T-cell (primary cell): ENCODE measurements at regions of chr11 and their contacts with region 1.

Region 1: DNA sequence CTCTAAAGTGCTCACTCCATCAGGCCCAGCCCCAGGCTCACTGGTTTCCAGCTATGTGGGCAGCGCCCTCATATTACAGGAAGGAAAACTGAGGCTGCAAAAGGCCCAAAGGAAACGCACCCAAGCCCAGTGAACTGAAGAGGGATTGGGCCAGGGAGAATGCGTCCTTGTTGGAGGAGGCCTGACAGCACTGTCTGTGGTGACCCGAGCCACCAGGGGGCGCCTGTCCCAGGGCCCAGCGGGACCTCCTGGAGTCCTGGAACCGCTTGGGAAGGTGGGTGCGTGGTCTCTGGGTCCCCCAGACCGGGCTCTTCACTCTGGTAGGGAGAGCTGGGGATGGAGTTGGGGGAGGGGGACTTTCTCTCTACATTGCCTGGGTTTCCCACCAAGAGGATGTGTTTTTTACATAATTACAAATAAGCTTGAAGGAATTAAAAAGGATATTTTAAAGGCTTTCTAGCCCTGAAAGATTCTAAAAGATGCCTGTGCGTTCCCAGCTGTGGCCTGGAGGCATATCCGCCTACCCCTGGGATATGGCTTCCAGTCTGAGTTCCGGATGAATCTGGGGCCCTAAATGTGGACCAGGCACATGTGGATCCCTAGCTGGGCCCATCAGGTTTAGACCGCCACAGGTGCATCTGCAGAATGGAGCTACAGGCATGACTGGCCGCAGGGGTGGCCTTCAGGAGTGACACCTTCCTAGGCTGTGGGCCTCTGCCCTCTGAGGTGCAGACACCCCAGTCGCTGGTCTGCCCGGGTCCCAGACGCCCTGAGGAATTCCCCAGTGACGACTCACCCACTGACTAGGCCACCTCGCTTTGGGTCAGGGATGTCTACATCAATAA is 4.2 kb downstream of the SPI1 start:
- DNase-seq: peak; percentile 46 to 91 (median 79)
- ATAC-seq: peak; percentile 89 to 97 (median 92)
- H3K4me3 ChIP-seq: no peak overlapping the region
- H3K4me3 Mint-ChIP-seq: no peak overlapping the region
- H3K27ac ChIP-seq: peak overlapping the region; percentile 20
- H3K27ac Mint-ChIP-seq: peak overlapping the region; percentile 39 to 46
- H3K4me1 ChIP-seq: peaks cover 0 to 13% of the 10 kb centered on the region in 2 experiments
- H3K4me1 Mint-ChIP-seq: peaks cover 5 to 11% (median 9%) of the 10 kb centered on the region in 3 donors
- H3K27me3 ChIP-seq: no peaks in the 10 kb centered on the region
- H3K27me3 Mint-ChIP-seq: no peaks in the 10 kb centered on the region

Region 2: DNA sequence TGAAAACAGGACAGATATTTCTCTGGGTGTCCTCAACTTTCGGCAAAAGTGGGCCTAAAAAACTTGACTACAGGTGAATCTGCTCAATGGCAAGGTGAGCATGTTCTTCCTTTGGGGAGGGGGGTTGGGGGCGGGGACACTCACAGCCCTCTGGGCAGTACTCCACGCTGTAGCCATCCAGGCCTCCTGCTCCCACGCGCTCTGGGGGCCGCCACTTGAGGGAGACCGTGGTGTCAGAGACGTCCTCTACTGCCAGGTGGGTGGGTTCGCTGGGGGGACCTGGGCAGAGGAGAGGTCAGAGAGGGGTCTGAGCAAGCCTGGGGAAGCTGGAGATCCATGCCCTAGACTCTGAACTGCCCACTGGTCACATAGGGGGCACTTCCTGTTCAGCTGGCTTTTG is 38.4 kb before region 1 on chr11:
- CTCF ChIA-PET with region 1: no interaction called
- POLR2A ChIA-PET with region 1: no interaction called
- DNase-seq: no peak
- ATAC-seq: no peak
- H3K4me3 ChIP-seq: no peak overlapping the region
- H3K4me3 Mint-ChIP-seq: no peak overlapping the region
- H3K27ac ChIP-seq: no peak overlapping the region
- H3K27ac Mint-ChIP-seq: no peak overlapping the region
- H3K4me1 ChIP-seq: no peaks in the 10 kb centered on the region
- H3K4me1 Mint-ChIP-seq: no peaks in the 10 kb centered on the region
- H3K27me3 ChIP-seq: peaks cover 0 to 3% of the 10 kb centered on the region in 2 experiments
- H3K27me3 Mint-ChIP-seq: no peaks in the 10 kb centered on the region

Region 3: DNA sequence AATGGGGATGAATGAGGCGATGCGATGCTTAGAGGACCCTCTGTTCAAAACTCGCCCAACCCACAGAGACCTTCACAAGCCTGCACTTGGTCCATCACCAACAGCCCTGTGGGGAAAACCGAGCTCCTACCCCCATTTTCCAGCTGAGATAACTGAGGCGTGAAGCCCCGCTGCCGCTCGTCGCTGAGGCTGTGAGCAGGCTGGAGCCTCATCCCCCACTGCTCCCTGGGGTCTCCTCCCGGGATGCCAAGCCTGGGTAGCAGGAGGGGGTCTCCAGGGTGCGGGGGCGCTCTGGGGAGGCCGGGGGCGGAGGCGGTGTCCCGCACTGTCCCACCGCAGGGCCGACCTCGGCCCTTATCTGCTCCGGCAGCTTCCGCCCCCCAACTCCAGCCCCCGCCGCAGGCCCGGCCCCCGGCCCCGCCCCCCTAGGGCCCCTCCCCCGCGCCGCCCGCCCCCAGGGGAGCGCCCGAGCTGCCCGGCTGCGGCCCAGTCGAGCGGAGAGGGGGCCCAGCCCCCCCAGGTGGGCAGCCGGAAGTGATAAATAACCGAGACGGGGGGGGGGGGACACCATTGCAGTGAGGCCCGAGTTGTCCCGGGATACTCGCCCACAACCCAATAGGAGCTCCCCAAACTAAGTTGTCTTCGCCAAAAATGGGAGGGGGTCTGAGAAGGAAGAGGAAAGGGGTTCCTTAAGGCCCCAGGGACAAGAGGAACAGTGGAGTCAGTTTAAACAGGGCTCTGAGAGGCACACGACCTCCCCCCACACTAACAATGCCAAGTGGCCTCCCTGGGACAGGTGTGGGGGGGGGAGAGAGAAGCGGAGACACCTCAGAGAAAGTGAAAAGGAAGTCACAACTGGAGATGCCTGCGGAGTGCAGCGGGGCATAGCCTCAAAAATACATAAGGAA is 26.0 kb after region 1 on chr11:
- CTCF ChIA-PET with region 1: interaction called, 4 to 12 read pairs
- POLR2A ChIA-PET with region 1: interaction called in 1 of 2 experiments, 3 read pairs
- DNase-seq: peak in 16 of 35 experiments; percentile 26 to 58 (median 32)
- ATAC-seq: peak; percentile 83 to 88 (median 87)
- H3K4me3 ChIP-seq: peak overlapping the region; percentile 68 to 70
- H3K4me3 Mint-ChIP-seq: peak overlapping the region; percentile 77 to 84 (median 78)
- H3K27ac ChIP-seq: peak overlapping the region; percentile 67
- H3K27ac Mint-ChIP-seq: peak overlapping the region; percentile 93 to 97
- H3K4me1 ChIP-seq: peaks cover 12 to 38% of the 10 kb centered on the region in 2 experiments
- H3K4me1 Mint-ChIP-seq: peaks cover 30 to 36% (median 33%) of the 10 kb centered on the region in 3 donors
- H3K27me3 ChIP-seq: no peaks in the 10 kb centered on the region
- H3K27me3 Mint-ChIP-seq: no peaks in the 10 kb centered on the region

Region 4: DNA sequence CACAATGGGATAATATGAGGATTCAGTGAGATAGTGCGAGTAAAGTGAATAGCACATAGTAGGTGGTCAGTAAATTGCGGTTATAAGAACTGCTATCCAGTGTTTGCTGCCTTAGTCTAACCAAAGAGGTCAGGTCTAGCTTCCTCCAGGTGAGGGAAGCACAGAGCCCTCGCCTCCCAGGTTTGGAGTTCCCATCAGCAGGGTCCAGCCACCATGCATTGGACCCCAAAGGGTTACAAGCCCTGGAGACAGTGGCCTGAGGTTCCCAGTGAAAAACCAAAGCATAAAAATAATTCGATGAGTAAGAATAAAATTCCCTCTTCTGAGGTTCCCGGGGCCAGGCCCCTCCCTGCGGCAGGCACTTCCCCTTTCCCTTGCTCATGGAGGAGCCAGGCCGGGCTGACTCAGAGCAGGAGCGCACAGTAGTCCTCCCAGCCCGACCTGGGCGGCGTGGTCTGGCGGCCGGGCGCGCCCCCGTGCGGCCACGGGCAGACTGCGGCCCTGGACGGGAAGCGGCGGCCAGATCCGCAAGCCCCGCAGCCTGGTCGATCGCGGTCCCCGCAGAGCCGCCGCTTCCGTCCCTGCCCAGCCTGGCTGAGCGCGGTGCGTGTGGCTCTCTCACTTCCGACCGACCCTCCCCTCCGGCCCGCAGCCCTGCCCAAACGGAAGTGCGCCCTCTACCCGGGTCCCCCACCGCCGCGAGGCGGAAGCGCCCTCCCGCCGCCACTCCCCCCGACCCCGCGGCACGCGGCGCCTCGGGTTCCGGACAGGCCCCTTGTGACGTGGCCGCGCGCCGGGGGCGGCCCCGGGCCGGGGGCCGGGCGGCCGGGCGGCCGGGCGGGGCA is 33.9 kb after region 1 on chr11 and contains the start of gene SLC39A13:
- CTCF ChIA-PET with region 1: interaction called, 18 to 22 read pairs
- POLR2A ChIA-PET with region 1: no interaction called
- DNase-seq: peak; percentile 71 to 93 (median 83)
- ATAC-seq: peak; percentile 87 to 92 (median 89)
- H3K4me3 ChIP-seq: peak within 1 kb of the TSS; percentile 66 to 69
- H3K4me3 Mint-ChIP-seq: peak within 1 kb of the TSS; percentile 88 to 96 (median 90)
- H3K27ac ChIP-seq: peak within 1 kb of the TSS; percentile 75
- H3K27ac Mint-ChIP-seq: peak within 1 kb of the TSS; percentile 94 to 95
- H3K4me1 ChIP-seq: peaks cover 7 to 35% of the 10 kb centered on the region in 2 experiments
- H3K4me1 Mint-ChIP-seq: peaks cover 24% of the 10 kb centered on the region in 3 donors
- H3K27me3 ChIP-seq: no peaks in the 10 kb centered on the region
- H3K27me3 Mint-ChIP-seq: no peaks in the 10 kb centered on the region
- total RNA-seq, gene SLC39A13: 45.6 to 67.0 (median 65.2) TPM

Region 5: DNA sequence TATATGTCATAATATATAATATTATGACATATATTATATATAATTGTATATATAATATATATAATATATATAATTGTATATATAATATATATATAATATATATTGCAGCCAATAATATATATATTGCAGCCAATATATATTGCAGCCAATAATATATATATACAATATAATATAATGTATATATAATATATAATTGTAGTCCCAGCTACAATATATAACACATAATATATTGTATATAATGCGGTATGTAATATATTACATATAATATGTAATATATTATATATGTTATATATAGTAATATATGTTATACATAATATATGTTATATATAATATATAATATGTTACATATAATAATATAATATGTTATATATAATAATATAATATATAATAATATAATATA is 184.6 kb after region 1 on chr11:
- CTCF ChIA-PET with region 1: no interaction called
- POLR2A ChIA-PET with region 1: no interaction called
- DNase-seq: no peak
- ATAC-seq: no peak
- H3K4me3 ChIP-seq: no peak overlapping the region
- H3K4me3 Mint-ChIP-seq: no peak overlapping the region
- H3K27ac ChIP-seq: no peak overlapping the region
- H3K27ac Mint-ChIP-seq: no peak overlapping the region
- H3K4me1 ChIP-seq: peaks cover 0 to 1% of the 10 kb centered on the region in 2 experiments
- H3K4me1 Mint-ChIP-seq: peaks cover 0 to 6% (median 3%) of the 10 kb centered on the region in 3 donors
- H3K27me3 ChIP-seq: no peaks in the 10 kb centered on the region
- H3K27me3 Mint-ChIP-seq: no peaks in the 10 kb centered on the region